ENCODE measurements at regions of chr2 and their contacts with region 1.

Region 1: GRCh38 chr2:190488516-190489233 is 45.8 kb downstream of the NEMP2 start:
- DNase-seq: no peak
- H3K4me3 Mint-ChIP-seq: no peak overlapping the region
- H3K27ac Mint-ChIP-seq: no peak overlapping the region
- H3K4me1 Mint-ChIP-seq: peaks cover 33% of the 10 kb centered on the region
- H3K27me3 Mint-ChIP-seq: no peaks in the 10 kb centered on the region

Region 2: GRCh38 chr2:190467575-190468083 is 21.0 kb before region 1 on chr2:
- CTCF ChIA-PET with region 1: interaction called, 3 read pairs
- intact Hi-C with region 1: loop called (anchors 2 kb)
- DNase-seq: no peak
- H3K4me3 Mint-ChIP-seq: no peak overlapping the region
- H3K27ac Mint-ChIP-seq: no peak overlapping the region
- H3K4me1 Mint-ChIP-seq: peaks cover 58% of the 10 kb centered on the region
- H3K27me3 Mint-ChIP-seq: no peaks in the 10 kb centered on the region

Region 3: DNA sequence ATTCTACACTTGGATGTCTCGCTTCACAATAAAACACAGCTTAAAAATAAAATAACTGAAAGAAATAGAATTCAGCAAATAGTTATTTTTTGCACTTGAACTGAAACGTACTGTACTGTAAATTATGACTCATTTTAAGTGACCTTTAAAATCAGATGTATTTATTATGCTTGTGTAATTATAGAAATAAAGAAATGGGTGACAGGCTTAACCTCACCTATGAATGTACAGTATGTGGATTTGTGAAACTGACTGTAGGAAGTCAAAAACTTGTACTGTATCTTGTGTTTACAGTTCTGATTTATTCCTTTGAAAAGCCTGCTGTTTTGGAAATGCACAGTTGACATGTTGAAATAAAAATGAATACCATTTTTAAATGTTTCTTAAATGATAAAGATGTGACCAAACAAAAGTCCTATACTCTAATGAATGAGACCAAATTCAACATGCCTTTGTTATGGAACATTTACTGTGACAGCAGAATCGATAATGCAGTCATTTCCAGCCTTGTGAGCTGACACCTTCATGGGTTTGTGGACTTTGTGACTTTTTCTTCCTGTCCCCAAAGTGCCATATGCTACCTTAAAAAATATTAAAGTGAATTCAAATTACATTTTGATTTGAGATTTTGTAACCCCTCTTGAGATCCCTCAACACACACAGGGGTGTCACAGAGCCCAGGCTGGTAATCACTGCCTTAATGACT is 13.2 kb after region 1 on chr2:
- CTCF ChIA-PET with region 1: no interaction called
- intact Hi-C with region 1: no loop called
- DNase-seq: no peak
- H3K4me3 Mint-ChIP-seq: no peak overlapping the region
- H3K27ac Mint-ChIP-seq: no peak overlapping the region
- H3K4me1 Mint-ChIP-seq: peaks cover 18% of the 10 kb centered on the region
- H3K27me3 Mint-ChIP-seq: no peaks in the 10 kb centered on the region